ENCODE measurements at regions of chr22 and their contacts with region 1.

Region 1: DNA sequence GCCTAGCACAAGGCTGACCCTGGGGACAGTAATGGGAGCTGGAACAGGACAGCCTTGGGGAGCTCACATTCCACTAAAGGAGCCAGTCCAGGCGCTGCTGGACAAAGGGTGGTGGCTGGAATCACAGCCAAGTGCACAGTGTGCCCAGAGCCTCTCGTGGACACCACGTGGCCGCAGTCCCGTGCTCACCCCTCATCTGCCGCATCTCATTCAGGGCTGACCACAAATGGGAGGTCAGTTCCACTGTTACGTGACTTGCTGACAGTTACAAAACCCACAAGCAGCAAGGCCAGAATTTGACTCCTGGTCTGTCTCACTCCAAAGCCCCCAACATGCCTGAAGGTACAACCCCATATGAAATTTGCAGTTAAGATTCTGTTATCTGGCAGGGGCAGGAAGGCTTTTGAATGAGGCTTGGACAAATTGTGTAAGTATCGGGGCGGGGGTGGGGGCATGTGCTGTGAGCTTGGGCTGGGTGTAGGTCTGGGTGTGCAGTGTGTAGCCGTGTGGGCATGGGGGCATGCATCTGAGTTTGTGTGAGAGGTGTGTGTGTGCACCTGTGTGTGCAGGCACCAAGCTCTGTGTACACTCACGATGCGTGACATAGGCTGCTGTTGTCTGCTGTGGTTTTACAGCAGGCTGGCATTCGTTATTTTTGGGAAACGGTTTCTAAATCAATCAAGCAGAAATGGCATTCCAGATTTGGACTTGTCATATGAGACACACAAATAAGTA is 301.7 kb downstream of the BRD1 start:
- DNase-seq: peak in 9 of 10 donors; percentile 45 to 80 (median 67)
- H3K4me3 ChIP-seq: peak overlapping the region in 3 of 59 donors; percentile 17 to 23 (median 20)
- H3K27ac ChIP-seq: peak overlapping the region in 3 of 59 donors; percentile 7 to 23 (median 11)
- H3K27me3 ChIP-seq: no peaks in the 10 kb centered on the region
- CTCF ChIP-seq: peak in 2 of 56 donors; percentile 8 to 18

Region 2: DNA sequence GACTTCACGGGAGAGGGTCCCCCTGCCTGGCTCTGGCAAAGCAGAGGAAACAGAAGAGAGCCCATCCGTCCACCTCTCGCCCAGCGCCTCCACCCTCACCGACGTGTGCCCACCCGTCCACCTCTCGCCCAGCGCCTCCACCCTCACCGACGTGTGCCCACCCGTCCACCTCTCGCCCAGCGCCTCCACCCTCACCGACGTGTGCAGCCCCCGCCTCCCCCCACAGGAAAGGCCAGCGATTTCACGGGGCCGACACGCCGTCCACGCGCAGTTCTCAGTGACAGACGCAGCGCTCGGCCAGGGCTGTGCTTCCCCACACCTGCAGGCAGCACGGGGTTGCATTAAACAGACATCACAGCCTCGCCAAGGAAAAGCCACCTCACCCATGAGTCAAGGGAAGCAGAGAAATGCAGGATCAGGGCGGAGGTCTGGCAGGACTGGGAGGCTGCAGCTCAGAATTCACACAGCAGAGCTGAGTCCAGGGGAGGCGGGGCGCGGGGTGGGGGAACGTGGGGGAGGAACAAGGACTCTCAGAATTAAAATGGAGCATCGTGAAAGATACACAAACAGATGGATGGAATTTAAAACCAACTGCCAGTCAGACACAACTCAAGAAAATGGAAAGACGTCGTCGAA is 76.0 kb before region 1 on chr22:
- intact Hi-C with region 1: loop called in 1 of 2 experiments (anchors 5 kb)
- DNase-seq: no peak
- H3K4me3 ChIP-seq: peak overlapping the region in 49 of 59 donors; percentile 5 to 63 (median 34)
- H3K27ac ChIP-seq: peak overlapping the region in 47 of 59 donors; percentile 8 to 97 (median 89)
- H3K27me3 ChIP-seq: peaks cover 0 to 28% (median 0%) of the 10 kb centered on the region in 45 donors
- CTCF ChIP-seq: no peak

Region 3: GRCh38 chr22:49481659-49482399 is 44.1 kb before region 1 on chr22:
- intact Hi-C with region 1: loop called in 1 of 2 experiments (anchors 5 kb)
- DNase-seq: peak in 1 of 10 donors; percentile 14
- H3K4me3 ChIP-seq: peak overlapping the region in 42 of 59 donors; percentile 5 to 50 (median 24)
- H3K27ac ChIP-seq: no peak overlapping the region
- H3K27me3 ChIP-seq: peaks cover 0 to 24% (median 0%) of the 10 kb centered on the region in 45 donors
- CTCF ChIP-seq: no peak

Region 4: DNA sequence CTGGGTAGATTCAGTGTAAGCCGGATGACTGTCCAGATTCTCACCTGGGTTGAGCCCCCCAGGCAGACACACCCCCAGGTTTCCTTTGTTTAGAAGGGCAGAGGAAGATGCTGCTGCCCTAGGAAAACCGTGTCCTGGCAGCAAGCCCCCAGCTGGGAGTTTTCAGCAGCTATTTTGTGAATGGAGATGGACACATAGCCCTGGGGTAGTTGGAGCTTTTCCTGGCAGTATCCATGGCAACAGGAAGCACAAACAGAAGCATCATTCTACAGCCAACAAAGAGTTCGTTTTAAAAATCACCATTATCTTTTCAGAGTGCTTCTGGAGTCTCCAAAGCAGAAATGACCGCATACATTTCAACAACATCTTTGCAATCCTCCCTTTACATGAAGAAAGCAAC is 56.2 kb after region 1 on chr22:
- intact Hi-C with region 1: loop called in 1 of 2 experiments (anchors 5 kb)
- DNase-seq: peak; percentile 14 to 90 (median 72)
- H3K4me3 ChIP-seq: peak overlapping the region in 2 of 59 donors; percentile 1 to 24
- H3K27ac ChIP-seq: peak overlapping the region in 12 of 59 donors; percentile 4 to 70 (median 31)
- H3K27me3 ChIP-seq: no peaks in the 10 kb centered on the region
- CTCF ChIP-seq: peak in 3 of 56 donors; percentile 8 to 26 (median 9)

Measured in dorsolateral prefrontal cortex (tissue), 120 donors.